ENCODE measurements at regions of chr1 and their contacts with region 1.

Region 1: DNA sequence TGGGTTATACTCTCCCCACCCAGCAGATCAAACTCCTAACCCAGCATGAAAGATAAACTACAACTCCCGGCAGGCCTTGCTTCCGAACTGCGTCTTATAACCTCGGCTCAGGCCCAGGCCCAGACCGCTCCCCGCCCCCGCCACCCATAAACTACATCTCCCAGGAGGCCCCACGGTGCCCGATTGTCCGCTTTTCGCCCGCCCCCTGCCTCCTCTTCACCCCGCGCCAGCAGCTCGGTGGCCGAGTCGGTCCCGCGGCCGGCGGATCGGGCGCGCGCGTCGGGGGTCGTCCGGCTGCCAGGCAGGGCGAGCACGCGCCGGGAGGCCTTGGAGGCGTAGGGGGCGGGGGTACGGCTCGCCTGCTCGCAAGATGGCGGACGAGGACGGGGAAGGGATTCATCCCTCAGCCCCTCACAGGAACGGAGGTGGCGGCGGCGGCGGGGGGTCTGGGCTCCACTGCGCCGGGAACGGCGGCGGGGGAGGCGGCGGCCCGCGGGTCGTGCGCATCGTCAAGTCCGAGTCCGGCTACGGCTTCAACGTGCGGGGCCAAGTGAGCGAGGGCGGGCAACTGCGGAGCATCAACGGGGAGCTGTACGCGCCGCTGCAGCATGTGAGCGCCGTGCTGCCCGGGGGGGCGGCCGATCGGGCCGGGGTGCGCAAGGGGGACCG is at the start of gene SNX27:
- DNase-seq: peak; percentile 92 to 94
- ATAC-seq: peak; percentile 94 to 96 (median 96)
- H3K4me3 ChIP-seq: peak within 1 kb of the TSS; percentile 98
- H3K27ac ChIP-seq: peak within 1 kb of the TSS; percentile 90
- H3K4me1 ChIP-seq: peaks cover 30% of the 10 kb centered on the region
- H3K27me3 ChIP-seq: no peaks in the 10 kb centered on the region
- CTCF ChIP-seq: no peak
- total RNA-seq, gene SNX27: 39.8 to 47.2 (median 43.3) TPM

Region 2: GRCh38 chr1:151547119-151547899 is 64.7 kb before region 1 on chr1:
- intact Hi-C with region 1: no loop called
- DNase-seq: peak; percentile 59 to 65
- ATAC-seq: peak; percentile 80 to 82 (median 82)
- H3K4me3 ChIP-seq: peak overlapping the region; percentile 28
- H3K27ac ChIP-seq: peak overlapping the region; percentile 41
- H3K4me1 ChIP-seq: peaks cover 24% of the 10 kb centered on the region
- H3K27me3 ChIP-seq: no peaks in the 10 kb centered on the region
- CTCF ChIP-seq: no peak

Region 3: GRCh38 chr1:151661751-151662150 is 49.8 kb after region 1 on chr1:
- intact Hi-C with region 1: loop called in 1 of 2 experiments (anchors 10 kb)
- DNase-seq: no peak
- ATAC-seq: no peak
- H3K4me3 ChIP-seq: no peak overlapping the region
- H3K27ac ChIP-seq: no peak overlapping the region
- H3K4me1 ChIP-seq: peaks cover 21% of the 10 kb centered on the region
- H3K27me3 ChIP-seq: no peaks in the 10 kb centered on the region
- CTCF ChIP-seq: no peak